Activated CD4-positive, alpha-beta T cell treated with anti-CD3 and anti-CD28 coated beads, Interleukin-2, amount 10 ng/mL, durations not matched to agents 24 days and 14 days (primary cell): ENCODE measurements at regions of chr15 and their contacts with region 1.

Region 1: GRCh38 chr15:52558196-52558595 is 10.6 kb downstream of the ARPP19 start:
- DNase-seq: peak; percentile 85
- H3K4me3 Mint-ChIP-seq: peak overlapping the region; percentile 36
- H3K27ac Mint-ChIP-seq: peak overlapping the region; percentile 86
- H3K4me1 Mint-ChIP-seq: peaks cover 54% of the 10 kb centered on the region
- H3K27me3 Mint-ChIP-seq: no peaks in the 10 kb centered on the region

Region 2: GRCh38 chr15:50765195-50765973 is 1792.8 kb before region 1 on chr15 and contains the start of gene SPPL2A:
- intact Hi-C with region 1: loop called (anchors 5 kb)
- DNase-seq: peak; percentile 94
- H3K4me3 Mint-ChIP-seq: peak within 1 kb of the TSS; percentile 92
- H3K27ac Mint-ChIP-seq: peak within 1 kb of the TSS; percentile 97
- H3K4me1 Mint-ChIP-seq: peaks cover 54% of the 10 kb centered on the region
- H3K27me3 Mint-ChIP-seq: no peaks in the 10 kb centered on the region
- total RNA-seq, gene SPPL2A: 85.0 and 86.6 TPM in 2 replicates

Region 3: GRCh38 chr15:52261498-52262242 is 296.5 kb before region 1 on chr15:
- intact Hi-C with region 1: loop called (anchors 2 kb)
- DNase-seq: peak; percentile 90
- H3K4me3 Mint-ChIP-seq: peak overlapping the region; percentile 81
- H3K27ac Mint-ChIP-seq: peak overlapping the region; percentile 94
- H3K4me1 Mint-ChIP-seq: peaks cover 43% of the 10 kb centered on the region
- H3K27me3 Mint-ChIP-seq: no peaks in the 10 kb centered on the region

Region 4: DNA sequence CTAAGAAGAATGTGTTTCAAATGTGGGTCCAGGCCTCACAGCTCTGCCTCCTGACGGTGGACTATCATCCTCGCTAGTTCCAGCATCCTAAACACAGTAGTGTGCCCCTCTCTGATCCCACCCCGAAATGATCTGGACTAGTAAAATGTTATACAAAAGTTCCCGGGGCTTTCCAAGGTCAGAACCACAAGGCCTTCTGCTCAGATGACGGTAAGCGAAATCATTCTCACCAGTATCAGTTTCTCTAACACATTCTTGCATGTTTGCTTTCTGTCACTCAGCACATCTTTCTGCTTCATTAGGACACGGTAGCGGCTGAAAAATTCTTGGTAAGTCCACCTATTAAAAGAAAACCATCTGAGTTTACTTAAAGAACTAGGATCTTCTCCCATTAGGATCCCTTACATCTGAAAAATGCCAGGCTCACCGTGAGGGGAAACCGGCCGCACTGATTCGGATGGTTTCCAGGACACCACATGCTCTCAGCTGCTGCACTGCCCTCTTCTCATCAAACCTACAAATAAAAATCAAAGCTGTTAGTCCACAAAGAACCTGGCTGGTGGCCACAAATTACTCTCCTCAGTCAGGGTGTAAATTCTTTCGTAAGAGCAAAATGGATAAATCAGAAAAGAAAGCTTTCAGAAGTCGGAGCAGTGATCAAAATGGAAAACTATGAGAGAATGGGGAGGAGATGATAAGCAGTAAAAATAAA is 178.6 kb before region 1 on chr15:
- intact Hi-C with region 1: loop called (anchors 5 kb)
- DNase-seq: no peak
- H3K4me3 Mint-ChIP-seq: no peak overlapping the region
- H3K27ac Mint-ChIP-seq: peak overlapping the region; percentile 4
- H3K4me1 Mint-ChIP-seq: peaks cover 20% of the 10 kb centered on the region
- H3K27me3 Mint-ChIP-seq: no peaks in the 10 kb centered on the region

Region 5: GRCh38 chr15:52528991-52529926 is 28.9 kb before region 1 on chr15:
- intact Hi-C with region 1: loop called (anchors 1 kb)
- DNase-seq: peak; percentile 94
- H3K4me3 Mint-ChIP-seq: peak overlapping the region; percentile 76
- H3K27ac Mint-ChIP-seq: peak overlapping the region; percentile 81
- H3K4me1 Mint-ChIP-seq: peaks cover 30% of the 10 kb centered on the region
- H3K27me3 Mint-ChIP-seq: peaks cover 14% of the 10 kb centered on the region

Region 6: DNA sequence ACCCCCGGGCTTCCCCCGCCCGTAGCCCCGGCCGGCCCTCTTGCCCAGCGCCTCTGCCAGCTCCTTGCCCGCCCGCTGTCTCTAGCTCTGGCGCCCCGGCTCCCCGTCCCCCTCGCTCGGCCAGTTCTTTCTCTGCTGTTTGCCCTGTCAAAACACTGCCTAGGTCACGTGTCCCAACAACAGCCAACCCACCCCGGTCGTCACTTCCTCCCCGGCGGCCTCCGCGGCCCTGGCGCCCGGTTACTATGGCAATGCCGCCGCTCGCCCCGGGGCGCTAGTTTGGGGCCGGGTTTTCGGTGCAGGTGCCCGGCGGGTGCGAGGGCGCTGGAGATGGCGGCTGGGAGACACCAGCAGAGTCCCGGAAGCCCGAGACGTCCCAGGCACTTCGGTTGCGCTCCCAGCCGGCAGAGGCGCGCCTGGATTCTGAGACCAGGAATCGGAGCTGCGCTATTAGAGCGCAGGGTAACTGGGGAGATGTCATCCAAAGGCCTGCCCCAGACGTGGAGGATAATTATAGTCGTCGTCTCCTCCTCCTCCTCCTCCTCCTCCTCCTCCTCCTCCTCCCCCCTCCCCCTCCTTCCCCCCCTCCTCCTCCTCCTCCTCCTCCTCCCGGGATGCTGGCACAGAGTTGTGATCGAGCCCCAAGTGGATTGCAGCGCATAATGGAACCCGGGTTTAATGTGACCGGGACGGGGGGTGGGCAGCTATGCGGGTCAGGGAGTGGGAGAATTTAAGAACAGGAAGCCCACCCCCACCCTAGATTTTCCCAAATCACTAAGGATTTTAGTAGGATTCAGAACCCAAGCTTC is 121.2 kb after region 1 on chr15 and contains the start of gene ATOSA:
- intact Hi-C with region 1: loop called (anchors 2 kb)
- DNase-seq: peak; percentile 98
- H3K4me3 Mint-ChIP-seq: peak within 1 kb of the TSS; percentile 98
- H3K27ac Mint-ChIP-seq: peak within 1 kb of the TSS; percentile 99
- H3K4me1 Mint-ChIP-seq: peaks cover 31% of the 10 kb centered on the region
- H3K27me3 Mint-ChIP-seq: peaks cover 6% of the 10 kb centered on the region
- total RNA-seq, gene ATOSA: 9.3 and 13.4 TPM in 2 replicates